CD4-positive, alpha-beta memory T cell (primary cell): ENCODE measurements at regions of chr12 and their contacts with region 1.

Region 1: GRCh38 chr12:110600254-110600653 is 13.7 kb upstream of the TCTN1 start:
- DNase-seq: peak in 4 of 5 donors; percentile 51 to 56 (median 54)
- H3K4me3 ChIP-seq: no peak overlapping the region
- H3K4me3 Mint-ChIP-seq: no peak overlapping the region
- H3K27ac ChIP-seq: no peak overlapping the region
- H3K27ac Mint-ChIP-seq: peak overlapping the region in 3 of 7 donors; percentile 44 to 83 (median 55)
- H3K4me1 ChIP-seq: peaks cover 1% of the 10 kb centered on the region
- H3K4me1 Mint-ChIP-seq: peaks cover 4 to 11% (median 8%) of the 10 kb centered on the region in 4 donors
- H3K27me3 ChIP-seq: no peaks in the 10 kb centered on the region
- H3K27me3 Mint-ChIP-seq: no peaks in the 10 kb centered on the region

Region 2: GRCh38 chr12:110449799-110450497 is 150.3 kb before region 1 on chr12 and contains the start of gene ARPC3:
- CTCF ChIA-PET with region 1: interaction called, 140 read pairs
- POLR2A ChIA-PET with region 1: interaction called, 38 read pairs
- intact Hi-C with region 1: loop called (anchors 1 kb)
- DNase-seq: peak; percentile 94 to 96 (median 94)
- H3K4me3 ChIP-seq: peak within 1 kb of the TSS; percentile 76 to 90
- H3K4me3 Mint-ChIP-seq: peak within 1 kb of the TSS; percentile 99 to 100 (median 100)
- H3K27ac ChIP-seq: peak within 1 kb of the TSS; percentile 97
- H3K27ac Mint-ChIP-seq: peak within 1 kb of the TSS; percentile 99 to 100 (median 99)
- H3K4me1 ChIP-seq: peaks cover 34% of the 10 kb centered on the region
- H3K4me1 Mint-ChIP-seq: peaks cover 17 to 47% (median 38%) of the 10 kb centered on the region in 4 donors
- H3K27me3 ChIP-seq: no peaks in the 10 kb centered on the region
- H3K27me3 Mint-ChIP-seq: no peaks in the 10 kb centered on the region
- total RNA-seq, gene ARPC3: 191 to 203 TPM

Region 3: GRCh38 chr12:110508071-110508586 is 92.1 kb before region 1 on chr12:
- CTCF ChIA-PET with region 1: interaction called, 157 read pairs
- POLR2A ChIA-PET with region 1: interaction called, 7 read pairs
- intact Hi-C with region 1: loop called (anchors 1 kb)
- DNase-seq: no peak
- H3K4me3 ChIP-seq: no peak overlapping the region
- H3K4me3 Mint-ChIP-seq: no peak overlapping the region
- H3K27ac ChIP-seq: no peak overlapping the region
- H3K27ac Mint-ChIP-seq: no peak overlapping the region
- H3K4me1 ChIP-seq: no peaks in the 10 kb centered on the region
- H3K4me1 Mint-ChIP-seq: no peaks in the 10 kb centered on the region
- H3K27me3 ChIP-seq: no peaks in the 10 kb centered on the region
- H3K27me3 Mint-ChIP-seq: no peaks in the 10 kb centered on the region

Region 4: GRCh38 chr12:110537605-110538409 is 62.4 kb before region 1 on chr12:
- CTCF ChIA-PET with region 1: interaction called, 30 read pairs
- POLR2A ChIA-PET with region 1: interaction called, 8 read pairs
- intact Hi-C with region 1: no loop called
- DNase-seq: no peak
- H3K4me3 ChIP-seq: no peak overlapping the region
- H3K4me3 Mint-ChIP-seq: no peak overlapping the region
- H3K27ac ChIP-seq: no peak overlapping the region
- H3K27ac Mint-ChIP-seq: peak overlapping the region in 1 of 7 donors; percentile 35
- H3K4me1 ChIP-seq: no peaks in the 10 kb centered on the region
- H3K4me1 Mint-ChIP-seq: peaks cover 0 to 2% (median 1%) of the 10 kb centered on the region in 4 donors
- H3K27me3 ChIP-seq: no peaks in the 10 kb centered on the region
- H3K27me3 Mint-ChIP-seq: no peaks in the 10 kb centered on the region

Region 5: GRCh38 chr12:110577717-110578521 is 22.3 kb before region 1 on chr12:
- CTCF ChIA-PET with region 1: interaction called, 67 read pairs
- POLR2A ChIA-PET with region 1: interaction called, 7 read pairs
- intact Hi-C with region 1: loop called (anchors 1 kb)
- DNase-seq: peak in 4 of 5 donors; percentile 36 to 86 (median 38)
- H3K4me3 ChIP-seq: peak overlapping the region; percentile 2 to 25
- H3K4me3 Mint-ChIP-seq: peak overlapping the region; percentile 58 to 97 (median 78)
- H3K27ac ChIP-seq: peak overlapping the region; percentile 66
- H3K27ac Mint-ChIP-seq: peak overlapping the region; percentile 69 to 96 (median 92)
- H3K4me1 ChIP-seq: peaks cover 80% of the 10 kb centered on the region
- H3K4me1 Mint-ChIP-seq: peaks cover 50 to 82% (median 68%) of the 10 kb centered on the region in 4 donors
- H3K27me3 ChIP-seq: no peaks in the 10 kb centered on the region
- H3K27me3 Mint-ChIP-seq: no peaks in the 10 kb centered on the region

Region 6: DNA sequence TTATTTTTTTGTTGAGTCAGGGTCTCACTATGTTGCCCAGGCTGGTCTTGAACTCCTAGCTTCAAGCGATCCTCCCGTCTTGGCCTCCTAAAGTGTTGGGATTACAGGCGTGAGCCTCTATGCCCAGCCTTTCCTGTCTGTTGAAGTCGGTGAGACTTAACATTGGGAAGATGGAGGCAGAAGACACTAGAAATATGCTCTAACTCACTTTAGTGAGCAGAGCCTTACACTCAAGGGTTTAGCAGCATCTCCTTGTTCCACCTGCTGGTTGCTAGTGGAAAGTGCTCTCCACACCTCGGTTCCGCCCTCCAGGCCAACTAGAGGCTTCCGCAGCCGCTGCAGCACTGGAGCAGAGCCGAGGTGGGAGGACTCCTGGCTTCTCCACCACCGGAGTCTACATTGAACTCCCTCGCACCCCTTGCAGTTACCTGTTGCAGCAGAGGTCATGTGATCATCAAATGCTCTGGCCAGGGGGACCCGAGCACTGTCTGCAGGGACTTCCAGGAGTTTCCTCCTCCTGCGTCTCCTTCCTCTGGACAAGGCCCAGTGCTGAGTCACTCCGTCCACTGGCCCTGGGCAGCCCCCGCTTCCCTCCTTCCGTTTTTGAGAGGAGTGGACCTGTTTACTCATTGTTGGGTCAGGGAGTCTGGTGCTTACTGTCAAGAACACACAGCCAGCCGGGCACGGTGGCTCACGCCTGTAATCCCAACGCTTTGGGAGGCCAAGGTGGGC is 98.1 kb after region 1 on chr12:
- CTCF ChIA-PET with region 1: interaction called, 12 read pairs
- POLR2A ChIA-PET with region 1: interaction called, 3 read pairs
- intact Hi-C with region 1: loop called (anchors 1 kb)
- DNase-seq: peak; percentile 75 to 80 (median 78)
- H3K4me3 ChIP-seq: no peak overlapping the region
- H3K4me3 Mint-ChIP-seq: peak overlapping the region in 2 of 8 donors; percentile 46 to 48
- H3K27ac ChIP-seq: no peak overlapping the region
- H3K27ac Mint-ChIP-seq: peak overlapping the region in 4 of 7 donors; percentile 45 to 90 (median 64)
- H3K4me1 ChIP-seq: peaks cover 9% of the 10 kb centered on the region
- H3K4me1 Mint-ChIP-seq: peaks cover 4 to 11% (median 6%) of the 10 kb centered on the region in 4 donors
- H3K27me3 ChIP-seq: no peaks in the 10 kb centered on the region
- H3K27me3 Mint-ChIP-seq: no peaks in the 10 kb centered on the region

Region 7: GRCh38 chr12:110888256-110888991 is 288.2 kb after region 1 on chr12:
- CTCF ChIA-PET with region 1: interaction called, 13 read pairs
- POLR2A ChIA-PET with region 1: no interaction called
- intact Hi-C with region 1: loop called (anchors 5 kb)
- DNase-seq: no peak
- H3K4me3 ChIP-seq: peak overlapping the region in 1 of 2 donors; percentile 86
- H3K4me3 Mint-ChIP-seq: peak overlapping the region in 6 of 8 donors; percentile 94 to 96 (median 94)
- H3K27ac ChIP-seq: no peak overlapping the region
- H3K27ac Mint-ChIP-seq: peak overlapping the region in 4 of 7 donors; percentile 29 to 92 (median 81)
- H3K4me1 ChIP-seq: peaks cover 3% of the 10 kb centered on the region
- H3K4me1 Mint-ChIP-seq: peaks cover 3 to 8% (median 4%) of the 10 kb centered on the region in 4 donors
- H3K27me3 ChIP-seq: peaks cover 4% of the 10 kb centered on the region
- H3K27me3 Mint-ChIP-seq: peaks cover 2 to 4% of the 10 kb centered on the region in 2 donors